PC-3 (cell line): ENCODE measurements at regions of chr7 and their contacts with region 1.

Region 1: GRCh38 chr7:151028131-151028947 is at the start of gene ABCB8:
- DNase-seq: peak; percentile 99
- ATAC-seq: peak; percentile 87
- H3K4me3 ChIP-seq: peak within 1 kb of the TSS; percentile 75
- H3K27ac ChIP-seq: peak within 1 kb of the TSS; percentile 81
- H3K4me1 ChIP-seq: peaks cover 44% of the 10 kb centered on the region
- H3K27me3 ChIP-seq: no peaks in the 10 kb centered on the region
- CTCF ChIP-seq: peak; percentile 60
- total RNA-seq, gene ABCB8: 58.4 and 95.7 TPM in 2 replicates

Region 2: GRCh38 chr7:151080522-151081169 is 52.3 kb after region 1 on chr7 and contains the start of gene FASTK:
- CTCF ChIA-PET with region 1: no interaction called
- POLR2A ChIA-PET with region 1: no interaction called
- intact Hi-C with region 1: loop called (anchors 1 kb)
- DNase-seq: peak; percentile 94
- ATAC-seq: peak; percentile 62
- H3K4me3 ChIP-seq: peak within 1 kb of the TSS; percentile 91
- H3K27ac ChIP-seq: peak within 1 kb of the TSS; percentile 65
- H3K4me1 ChIP-seq: peaks cover 39% of the 10 kb centered on the region
- H3K27me3 ChIP-seq: no peaks in the 10 kb centered on the region
- CTCF ChIP-seq: no peak
- total RNA-seq, gene FASTK: 163 and 211 TPM in 2 replicates